ENCODE measurements at regions of chr6 and their contacts with region 1.

Region 1: GRCh38 chr6:151229401-151230276 is 10.1 kb upstream of the AKAP12 start:
- H3K4me3 ChIP-seq: no peak overlapping the region
- H3K27ac ChIP-seq: no peak overlapping the region
- H3K4me1 ChIP-seq: no peaks in the 10 kb centered on the region
- CTCF ChIP-seq: no peak

Region 2: GRCh38 chr6:151209071-151209831 is 20.4 kb before region 1 on chr6:
- CTCF ChIA-PET with region 1: no interaction called
- POLR2A ChIA-PET with region 1: no interaction called
- H3K4me3 ChIP-seq: peak overlapping the region; percentile 27
- H3K27ac ChIP-seq: no peak overlapping the region
- H3K4me1 ChIP-seq: no peaks in the 10 kb centered on the region; the same call in 1 of the 2 replicates
- CTCF ChIP-seq: no peak

Region 3: GRCh38 chr6:151240036-151240685 is 10.5 kb after region 1 on chr6:
- CTCF ChIA-PET with region 1: interaction called, 3 read pairs
- POLR2A ChIA-PET with region 1: interaction called, 11 read pairs
- H3K4me3 ChIP-seq: peak overlapping the region; percentile 67
- H3K27ac ChIP-seq: peak overlapping the region; percentile 64; the same call in 1 of the 2 replicates
- H3K4me1 ChIP-seq: peaks cover 9% of the 10 kb centered on the region; the same call in 1 of the 2 replicates
- CTCF ChIP-seq: peak; percentile 65

Measured in HEK293 (cell line).